CD4-positive, alpha-beta memory T cell (primary cell): ENCODE measurements at regions of chr12 and their contacts with region 1.

Region 1: DNA sequence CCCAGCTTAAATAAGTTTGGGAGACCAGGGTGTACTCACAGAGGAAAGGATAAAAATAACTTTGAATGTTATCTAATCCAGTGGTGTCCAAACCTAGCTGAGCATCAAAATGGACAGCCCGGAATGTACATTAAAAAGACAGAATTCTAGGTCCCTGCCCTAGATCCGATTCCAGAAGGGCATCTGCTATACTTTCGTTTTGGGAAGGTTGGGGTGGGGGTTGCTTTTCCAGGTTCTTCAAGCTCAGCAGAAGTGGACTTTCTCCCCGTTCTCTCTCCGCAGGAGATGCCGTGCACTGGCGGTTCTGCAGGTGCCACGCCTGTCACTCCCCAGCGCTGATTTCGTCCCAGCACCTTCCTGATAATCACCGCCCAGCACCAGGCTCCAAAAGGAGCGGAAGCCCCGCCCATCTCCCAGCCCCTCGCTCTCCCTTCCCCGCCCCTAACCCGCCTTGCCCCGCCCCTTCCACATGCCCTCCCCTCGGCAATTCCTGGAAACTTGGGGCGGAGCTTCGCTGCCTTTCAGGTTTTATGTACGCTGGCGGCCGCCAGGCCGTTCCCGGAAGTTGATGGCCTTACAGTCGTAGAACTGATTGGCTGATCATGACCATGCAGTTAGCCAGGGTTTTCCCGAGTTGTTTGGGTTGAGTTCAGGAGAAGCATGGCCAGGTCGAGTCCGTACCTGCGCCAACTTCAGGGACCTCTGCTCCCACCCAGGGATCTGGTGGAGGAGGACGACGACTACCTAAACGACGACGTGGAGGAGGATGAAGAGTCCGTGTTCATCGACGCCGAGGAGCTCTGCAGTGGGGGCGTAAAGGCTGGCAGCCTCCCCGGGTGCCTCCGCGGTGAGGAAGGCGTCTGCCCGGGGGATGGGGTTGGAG is at the start of gene HELB:
- DNase-seq: peak; percentile 86 to 94 (median 87)
- H3K4me3 ChIP-seq: peak within 1 kb of the TSS; percentile 66 to 95
- H3K4me3 Mint-ChIP-seq: peak within 1 kb of the TSS; percentile 87 to 100 (median 98)
- H3K27ac ChIP-seq: peak within 1 kb of the TSS; percentile 94
- H3K27ac Mint-ChIP-seq: peak within 1 kb of the TSS; percentile 96 to 99 (median 98)
- H3K4me1 ChIP-seq: peaks cover 45% of the 10 kb centered on the region
- H3K4me1 Mint-ChIP-seq: peaks cover 30 to 62% (median 36%) of the 10 kb centered on the region in 4 donors
- H3K27me3 ChIP-seq: no peaks in the 10 kb centered on the region
- H3K27me3 Mint-ChIP-seq: no peaks in the 10 kb centered on the region
- total RNA-seq, gene HELB: 64.9 to 69.0 TPM

Region 2: GRCh38 chr12:66130277-66131066 is 171.7 kb before region 1 on chr12 and contains the start of gene LLPH:
- CTCF ChIA-PET with region 1: no interaction called
- POLR2A ChIA-PET with region 1: interaction called, 10 read pairs
- intact Hi-C with region 1: no loop called
- DNase-seq: peak; percentile 84 to 93 (median 86)
- H3K4me3 ChIP-seq: peak within 1 kb of the TSS; percentile 72 to 86
- H3K4me3 Mint-ChIP-seq: peak within 1 kb of the TSS; percentile 92 to 99 (median 96)
- H3K27ac ChIP-seq: peak within 1 kb of the TSS; percentile 83
- H3K27ac Mint-ChIP-seq: peak within 1 kb of the TSS; percentile 93 to 99 (median 98)
- H3K4me1 ChIP-seq: peaks cover 37% of the 10 kb centered on the region
- H3K4me1 Mint-ChIP-seq: peaks cover 40 to 61% (median 45%) of the 10 kb centered on the region in 4 donors
- H3K27me3 ChIP-seq: no peaks in the 10 kb centered on the region
- H3K27me3 Mint-ChIP-seq: no peaks in the 10 kb centered on the region
- total RNA-seq, gene LLPH: 25.8 to 26.4 TPM

Region 3: DNA sequence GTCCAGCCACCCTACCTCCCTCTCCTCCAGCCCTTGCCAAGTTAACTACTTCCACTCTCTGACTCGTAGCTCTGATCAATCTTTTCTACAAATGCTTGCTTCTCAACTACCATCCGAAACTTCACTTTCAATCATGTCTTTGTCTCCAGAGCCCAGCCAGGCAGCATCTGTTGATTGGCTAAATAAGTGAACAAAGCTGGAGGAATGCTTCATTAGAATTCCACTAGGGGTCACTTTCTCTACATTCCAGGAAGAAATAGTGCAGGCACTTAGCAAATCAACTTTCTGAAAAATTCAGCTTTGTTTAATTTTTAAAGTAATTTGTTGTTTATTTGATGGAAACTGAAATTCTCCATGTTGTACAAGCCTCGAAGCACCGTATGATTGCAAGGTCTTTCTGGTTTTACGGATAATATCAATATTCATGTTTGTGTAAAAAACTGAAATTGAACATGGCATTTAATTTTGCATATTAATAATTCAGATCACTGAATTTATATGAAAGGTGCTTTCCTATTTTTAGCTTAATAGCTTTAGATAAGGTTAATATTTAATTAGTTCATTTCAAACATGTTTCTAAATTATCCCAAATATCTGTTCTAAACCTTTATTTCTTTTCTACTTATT is 32.3 kb before region 1 on chr12:
- CTCF ChIA-PET with region 1: interaction called, 43 read pairs
- POLR2A ChIA-PET with region 1: interaction called, 8 read pairs
- intact Hi-C with region 1: no loop called
- DNase-seq: peak in 4 of 5 donors; percentile 51 to 59 (median 54)
- H3K4me3 ChIP-seq: no peak overlapping the region
- H3K4me3 Mint-ChIP-seq: no peak overlapping the region
- H3K27ac ChIP-seq: no peak overlapping the region
- H3K27ac Mint-ChIP-seq: no peak overlapping the region
- H3K4me1 ChIP-seq: peaks cover 13% of the 10 kb centered on the region
- H3K4me1 Mint-ChIP-seq: peaks cover 1 to 10% (median 4%) of the 10 kb centered on the region in 4 donors
- H3K27me3 ChIP-seq: no peaks in the 10 kb centered on the region
- H3K27me3 Mint-ChIP-seq: no peaks in the 10 kb centered on the region

Region 4: GRCh38 chr12:66288121-66288520 is 14.1 kb before region 1 on chr12:
- CTCF ChIA-PET with region 1: interaction called, 14 read pairs
- POLR2A ChIA-PET with region 1: interaction called, 144 read pairs
- intact Hi-C with region 1: loop called (anchors 1 kb)
- DNase-seq: peak; percentile 86 to 92 (median 89)
- H3K4me3 ChIP-seq: peak overlapping the region; percentile 21 to 35
- H3K4me3 Mint-ChIP-seq: peak overlapping the region; percentile 36 to 79 (median 70)
- H3K27ac ChIP-seq: peak overlapping the region; percentile 35
- H3K27ac Mint-ChIP-seq: peak overlapping the region; percentile 61 to 94 (median 85)
- H3K4me1 ChIP-seq: peaks cover 100% of the 10 kb centered on the region
- H3K4me1 Mint-ChIP-seq: peaks cover 72 to 96% (median 83%) of the 10 kb centered on the region in 4 donors
- H3K27me3 ChIP-seq: no peaks in the 10 kb centered on the region
- H3K27me3 Mint-ChIP-seq: no peaks in the 10 kb centered on the region